GM12878 (cell line): ENCODE measurements at regions of chr3 and their contacts with region 1.

Region 1: DNA sequence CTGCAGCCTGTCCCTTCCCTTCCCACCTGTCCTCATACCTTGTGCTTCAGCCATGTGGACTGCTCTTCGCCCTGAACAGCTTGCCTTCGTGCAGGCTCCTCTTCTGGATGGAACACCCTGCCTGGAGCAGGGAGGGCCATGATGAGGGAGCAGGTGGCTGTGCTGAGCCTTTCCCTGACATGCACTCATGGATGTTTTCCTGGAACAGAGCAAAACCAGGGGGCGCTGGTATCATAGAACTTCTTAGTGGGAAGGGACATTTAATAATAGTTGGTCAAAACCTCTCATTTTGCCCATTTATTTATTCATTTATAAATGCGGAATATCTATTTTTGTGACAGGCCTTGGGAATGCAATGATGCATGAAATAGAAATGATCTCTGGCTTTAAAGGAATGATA is 149.3 kb downstream of the CACNA1D start:
- DNase-seq: no peak
- ATAC-seq: no peak
- H3K4me3 ChIP-seq: no peak overlapping the region
- H3K27ac ChIP-seq: no peak overlapping the region
- H3K4me1 ChIP-seq: no peaks in the 10 kb centered on the region
- H3K27me3 ChIP-seq: no peaks in the 10 kb centered on the region
- CTCF ChIP-seq: peak in 1 of 3 experiments; percentile 14; a peak in 1 of 6 replicates
- EP300 ChIP-seq: no peak
- POLR2A ChIP-seq: no peak
- RAD21 ChIP-seq: no peak

Region 2: GRCh38 chr3:53160660-53161449 is 482.9 kb before region 1 on chr3 and contains the start of gene PRKCD:
- CTCF ChIA-PET with region 1: no interaction called
- POLR2A ChIA-PET with region 1: no interaction called
- RAD21 ChIA-PET with region 1: no interaction called
- SMC1A ChIA-PET with region 1: no interaction called
- in situ Hi-C with region 1: no loop called
- intact Hi-C with region 1: no loop called
- DNase-seq: no peak
- ATAC-seq: peak; percentile 74
- H3K4me3 ChIP-seq: peak within 1 kb of the TSS; percentile 97
- H3K27ac ChIP-seq: peak within 1 kb of the TSS; percentile 92
- H3K4me1 ChIP-seq: peaks cover 45% of the 10 kb centered on the region
- H3K27me3 ChIP-seq: no peaks in the 10 kb centered on the region; a peak in 1 of 4 replicates
- CTCF ChIP-seq: peak; percentile 30 to 65 (median 49)
- EP300 ChIP-seq: no peak
- POLR2A ChIP-seq: peak; percentile 78
- RAD21 ChIP-seq: peak; percentile 13; the same call in 1 of the 2 replicates
- polyA plus RNA-seq, gene PRKCD: 13.2 to 22.1 TPM

Region 3: GRCh38 chr3:53416530-53416929 is 227.2 kb before region 1 on chr3:
- CTCF ChIA-PET with region 1: no interaction called
- POLR2A ChIA-PET with region 1: no interaction called
- RAD21 ChIA-PET with region 1: no interaction called
- SMC1A ChIA-PET with region 1: no interaction called
- in situ Hi-C with region 1: no loop called
- intact Hi-C with region 1: no loop called
- DNase-seq: no peak
- ATAC-seq: no peak
- H3K4me3 ChIP-seq: no peak overlapping the region
- H3K27ac ChIP-seq: no peak overlapping the region
- H3K4me1 ChIP-seq: no peaks in the 10 kb centered on the region
- H3K27me3 ChIP-seq: no peaks in the 10 kb centered on the region
- CTCF ChIP-seq: no peak
- EP300 ChIP-seq: no peak
- POLR2A ChIP-seq: no peak
- RAD21 ChIP-seq: no peak

Region 4: DNA sequence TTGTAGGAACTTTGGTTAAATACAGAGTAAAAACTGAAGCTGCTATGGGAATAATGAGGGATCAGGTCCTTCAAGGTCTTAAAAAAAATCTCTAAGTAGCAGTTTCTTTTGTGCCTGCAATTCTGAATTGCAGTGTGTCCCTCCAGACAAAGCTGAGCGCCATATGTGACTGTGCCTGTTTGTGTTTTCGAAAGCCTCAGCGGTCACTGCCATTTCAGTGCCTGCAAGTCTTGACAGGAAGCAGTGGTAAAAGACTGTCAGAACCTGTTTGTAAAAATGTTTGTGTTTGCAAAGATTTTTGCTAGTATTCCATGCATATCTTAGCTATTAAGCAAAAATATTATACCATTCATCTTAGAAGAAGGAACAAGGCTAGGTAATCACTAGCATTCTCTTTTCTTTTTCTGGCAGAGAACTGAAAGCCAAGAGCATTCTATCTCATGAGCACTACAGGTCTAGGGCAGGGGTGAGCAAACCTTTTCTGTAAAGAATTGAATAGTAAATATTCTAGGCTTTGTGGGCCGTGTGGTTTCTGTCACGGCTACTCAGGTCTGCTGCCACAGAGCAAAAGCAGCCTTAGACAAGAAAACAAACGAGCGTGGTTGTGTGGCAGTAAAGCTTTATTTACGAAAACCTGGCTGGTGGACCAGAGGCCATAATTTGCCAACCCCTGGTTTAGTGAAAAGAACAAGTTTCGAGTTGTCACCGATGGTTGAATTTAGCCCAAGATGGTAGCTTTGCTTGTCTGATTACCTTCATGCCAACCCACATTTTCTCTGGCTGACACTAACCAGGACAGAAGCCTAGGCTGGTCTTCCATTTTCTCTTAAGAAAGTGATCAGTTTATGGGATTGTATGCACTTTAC is 15.0 kb before region 1 on chr3:
- CTCF ChIA-PET with region 1: interaction called, 5 read pairs
- POLR2A ChIA-PET with region 1: no interaction called
- RAD21 ChIA-PET with region 1: interaction called, 3 read pairs
- SMC1A ChIA-PET with region 1: interaction called, 10 read pairs
- in situ Hi-C with region 1: no loop called
- intact Hi-C with region 1: no loop called
- DNase-seq: no peak
- ATAC-seq: peak; percentile 68
- H3K4me3 ChIP-seq: no peak overlapping the region
- H3K27ac ChIP-seq: no peak overlapping the region
- H3K4me1 ChIP-seq: no peaks in the 10 kb centered on the region
- H3K27me3 ChIP-seq: no peaks in the 10 kb centered on the region; a peak in 1 of 4 replicates
- CTCF ChIP-seq: no peak
- EP300 ChIP-seq: no peak
- POLR2A ChIP-seq: no peak
- RAD21 ChIP-seq: no peak

Region 5: GRCh38 chr3:53721187-53722119 is 77.7 kb after region 1 on chr3:
- CTCF ChIA-PET with region 1: no interaction called
- POLR2A ChIA-PET with region 1: no interaction called
- RAD21 ChIA-PET with region 1: no interaction called
- SMC1A ChIA-PET with region 1: no interaction called
- in situ Hi-C with region 1: no loop called
- intact Hi-C with region 1: no loop called
- DNase-seq: no peak
- ATAC-seq: no peak; the same call in 2 of the 3 replicates
- H3K4me3 ChIP-seq: no peak overlapping the region
- H3K27ac ChIP-seq: no peak overlapping the region
- H3K4me1 ChIP-seq: no peaks in the 10 kb centered on the region
- H3K27me3 ChIP-seq: no peaks in the 10 kb centered on the region; a peak in 1 of 4 replicates
- CTCF ChIP-seq: no peak
- EP300 ChIP-seq: no peak
- POLR2A ChIP-seq: no peak
- RAD21 ChIP-seq: no peak